ENCODE measurements at regions of chr16 and their contacts with region 1.

Region 1: DNA sequence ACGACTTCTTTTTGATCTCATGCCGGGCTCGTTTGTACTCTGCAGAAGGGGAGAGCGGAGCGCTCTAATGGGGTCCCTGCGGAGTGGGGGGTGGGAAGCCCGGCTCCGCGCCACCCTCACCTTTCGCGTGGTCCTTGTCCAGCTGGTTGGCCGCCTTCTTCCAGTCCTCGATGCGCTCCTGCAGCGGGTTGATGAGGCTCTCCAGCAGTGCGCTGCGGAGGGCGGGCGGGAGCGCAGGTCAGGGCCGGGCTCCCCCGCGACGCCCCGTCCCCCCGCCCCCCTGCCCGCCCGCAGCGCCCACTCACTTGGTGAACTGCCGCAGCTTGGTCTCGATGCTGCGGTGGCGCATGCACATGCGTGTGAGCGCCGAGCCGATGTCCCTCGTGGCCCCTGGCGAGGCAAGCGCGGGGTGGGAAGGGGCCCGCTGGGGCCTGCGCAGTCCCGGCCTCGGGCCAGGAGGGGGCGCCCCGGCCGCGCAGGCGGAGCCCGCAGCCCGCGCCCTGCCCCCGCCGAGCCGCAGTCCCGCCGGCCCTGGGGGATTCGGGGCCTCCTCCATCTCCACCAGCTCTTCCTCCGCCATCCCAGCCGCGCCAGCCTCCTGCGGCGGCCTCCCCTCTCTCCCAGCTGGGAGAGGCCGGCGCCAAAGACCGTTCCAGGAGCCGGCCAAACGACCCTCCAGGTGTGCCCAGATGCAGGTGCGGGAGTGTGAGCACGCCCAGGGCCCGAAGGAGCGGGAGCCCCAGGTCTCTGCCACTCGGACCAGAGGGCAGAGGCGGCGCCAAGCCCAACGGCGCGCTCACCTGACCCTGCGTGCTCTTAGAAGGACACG is 6.0 kb downstream of the MTSS2 start:
- DNase-seq: peak in 1 of 2 experiments; percentile 84
- H3K4me3 ChIP-seq: peak overlapping the region in 1 of 4 experiments; percentile 47; a peak in 2 of 8 replicates
- H3K27ac ChIP-seq: no peak overlapping the region
- H3K4me1 ChIP-seq: peaks cover 0 to 14% (median 4%) of the 10 kb centered on the region in 4 experiments; a peak in 5 of 7 replicates
- H3K27me3 ChIP-seq: peaks cover 0 to 5% (median 3%) of the 10 kb centered on the region in 4 experiments; a peak in 4 of 7 replicates
- CTCF ChIP-seq: peak in 2 of 3 experiments; percentile 73 to 86; a peak in 3 of 4 replicates
- EP300 ChIP-seq: no peak
- POLR2A ChIP-seq: no peak
- RAD21 ChIP-seq: peak; percentile 47 to 82

Region 2: DNA sequence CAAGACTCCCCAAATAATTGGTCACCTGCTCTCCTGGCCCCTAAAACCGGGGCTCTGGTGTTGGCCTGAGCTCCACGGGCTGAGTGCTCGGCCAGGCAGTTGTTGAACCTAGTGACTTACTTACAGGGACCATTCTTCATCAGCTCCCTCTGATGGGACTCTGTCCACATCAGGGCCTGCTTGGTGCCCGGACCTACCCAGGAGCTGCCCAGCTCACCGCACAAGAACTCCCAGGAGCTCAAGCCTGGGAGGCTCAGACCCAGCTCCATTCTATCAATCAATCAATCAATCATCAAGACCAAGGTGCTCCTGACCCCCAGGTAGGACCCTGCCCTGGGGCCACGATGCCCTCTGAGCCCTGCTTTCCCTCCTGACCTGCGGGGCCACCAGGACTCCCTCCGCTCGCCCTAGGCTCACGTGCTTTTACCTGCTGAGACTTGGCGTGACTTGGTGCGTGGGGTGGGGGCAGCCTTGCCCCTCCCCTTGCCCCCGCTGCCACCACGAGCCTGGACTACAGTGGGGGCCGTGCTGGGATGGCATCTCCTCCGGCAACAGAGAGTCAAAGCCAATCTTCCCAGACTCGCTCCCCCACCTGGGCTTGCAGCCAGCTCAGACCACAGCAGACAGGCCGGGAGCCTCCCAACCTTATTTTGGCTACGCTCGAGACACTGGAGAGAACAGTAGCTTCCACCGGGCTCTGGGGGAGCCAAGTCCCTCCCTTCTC is 17.8 kb before region 1 on chr16:
- CTCF ChIA-PET with region 1: interaction called, 12 read pairs
- POLR2A ChIA-PET with region 1: interaction called, 6 read pairs
- DNase-seq: no peak
- H3K4me3 ChIP-seq: no peak overlapping the region
- H3K27ac ChIP-seq: no peak overlapping the region
- H3K4me1 ChIP-seq: peaks cover 0 to 14% (median 7%) of the 10 kb centered on the region in 4 experiments; a peak in 6 of 7 replicates
- H3K27me3 ChIP-seq: no peaks in the 10 kb centered on the region
- CTCF ChIP-seq: no peak
- EP300 ChIP-seq: no peak
- POLR2A ChIP-seq: no peak
- RAD21 ChIP-seq: no peak

Region 3: GRCh38 chr16:70691223-70692129 is 11.6 kb after region 1 on chr16:
- CTCF ChIA-PET with region 1: interaction called, 22 read pairs
- POLR2A ChIA-PET with region 1: interaction called, 4 read pairs
- DNase-seq: no peak
- H3K4me3 ChIP-seq: no peak overlapping the region
- H3K27ac ChIP-seq: no peak overlapping the region
- H3K4me1 ChIP-seq: peaks cover 5 to 43% (median 30%) of the 10 kb centered on the region in 4 experiments
- H3K27me3 ChIP-seq: no peaks in the 10 kb centered on the region; a peak in 1 of 7 replicates
- CTCF ChIP-seq: no peak
- EP300 ChIP-seq: no peak
- POLR2A ChIP-seq: no peak
- RAD21 ChIP-seq: no peak

Region 4: DNA sequence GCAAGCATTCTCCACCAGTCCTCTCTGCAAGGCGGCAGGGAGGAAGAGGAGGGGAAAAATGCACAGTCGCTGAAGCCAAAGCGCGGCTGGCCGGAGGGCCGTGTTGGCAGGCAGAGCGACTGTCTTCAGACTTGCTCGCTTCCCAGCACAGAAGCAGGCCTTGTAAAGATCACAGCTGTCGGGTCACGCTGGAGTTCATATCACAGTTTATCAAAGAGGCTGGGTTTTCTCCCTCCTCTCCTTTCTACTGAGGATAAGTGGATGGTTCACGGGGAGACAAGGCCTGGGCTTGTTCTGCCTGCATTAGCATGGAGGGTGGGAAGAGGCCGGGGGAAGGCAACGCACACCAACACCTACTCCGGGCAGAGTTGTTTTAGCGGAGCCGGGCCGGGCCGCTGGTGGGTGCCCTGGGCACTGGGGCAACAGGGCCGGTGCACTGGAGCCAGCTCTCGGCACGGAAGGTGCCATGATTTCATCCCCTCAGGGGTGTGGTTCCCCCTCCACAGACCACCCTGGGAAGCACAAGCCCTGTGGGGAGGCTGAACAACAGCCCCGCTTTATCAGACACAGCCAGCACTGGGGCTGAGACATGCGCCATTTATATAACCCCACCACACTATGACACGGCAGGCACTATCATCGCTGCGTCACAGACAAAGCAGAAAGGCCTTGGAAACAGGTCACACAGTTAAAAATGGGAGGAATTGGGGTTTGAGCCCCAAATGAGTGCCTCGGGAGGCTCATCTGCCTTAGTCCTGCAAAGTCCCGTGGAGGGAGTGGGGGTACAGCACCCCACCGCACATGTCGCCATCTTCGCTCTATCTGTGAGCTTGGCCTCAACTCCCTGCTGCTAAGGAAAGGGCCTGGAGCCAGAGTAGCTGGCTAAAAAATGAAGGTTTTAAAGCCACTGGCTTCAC is 46.3 kb after region 1 on chr16:
- CTCF ChIA-PET with region 1: interaction called, 10 read pairs
- POLR2A ChIA-PET with region 1: interaction called, 3 read pairs
- DNase-seq: no peak
- H3K4me3 ChIP-seq: no peak overlapping the region
- H3K27ac ChIP-seq: no peak overlapping the region; the same call in 1 of the 2 replicates
- H3K4me1 ChIP-seq: peaks cover 0 to 6% (median 2%) of the 10 kb centered on the region in 4 experiments; a peak in 1 of 7 replicates
- H3K27me3 ChIP-seq: no peaks in the 10 kb centered on the region
- CTCF ChIP-seq: no peak
- EP300 ChIP-seq: no peak
- POLR2A ChIP-seq: no peak
- RAD21 ChIP-seq: no peak

Region 5: DNA sequence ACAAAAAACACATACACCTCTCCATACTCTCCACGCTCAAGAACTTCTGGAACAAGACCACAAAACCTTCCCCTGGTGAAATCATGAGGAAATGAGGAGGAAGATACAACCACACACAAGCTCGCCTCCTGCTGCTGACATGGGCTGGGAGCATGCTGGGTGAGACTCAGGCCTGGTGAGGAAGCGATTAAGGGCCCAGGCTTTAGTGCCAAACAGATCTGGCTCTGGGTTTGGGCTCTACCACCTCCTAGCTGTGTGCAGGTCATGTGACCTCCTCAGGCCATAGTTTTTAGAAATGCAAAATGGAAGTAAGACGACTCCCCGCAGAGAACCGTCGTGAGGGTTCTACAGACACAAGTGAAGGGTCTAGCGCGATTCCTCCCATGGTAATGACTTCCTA is 79.8 kb after region 1 on chr16:
- CTCF ChIA-PET with region 1: interaction called, 35 read pairs
- POLR2A ChIA-PET with region 1: interaction called, 5 read pairs
- DNase-seq: no peak
- H3K4me3 ChIP-seq: no peak overlapping the region
- H3K27ac ChIP-seq: no peak overlapping the region
- H3K4me1 ChIP-seq: peaks cover 0 to 10% (median 2%) of the 10 kb centered on the region in 4 experiments; a peak in 2 of 7 replicates
- H3K27me3 ChIP-seq: no peaks in the 10 kb centered on the region
- CTCF ChIP-seq: peak; percentile 16 to 45 (median 22); a peak in 3 of 4 replicates
- EP300 ChIP-seq: no peak
- POLR2A ChIP-seq: no peak
- RAD21 ChIP-seq: peak in 1 of 2 experiments; percentile 23; a peak in 1 of 4 replicates

Region 6: GRCh38 chr16:70778901-70779309 is 99.0 kb after region 1 on chr16:
- CTCF ChIA-PET with region 1: interaction called, 141 read pairs
- POLR2A ChIA-PET with region 1: interaction called, 4 read pairs
- DNase-seq: peak; percentile 74 to 87
- H3K4me3 ChIP-seq: no peak overlapping the region
- H3K27ac ChIP-seq: no peak overlapping the region
- H3K4me1 ChIP-seq: no peaks in the 10 kb centered on the region; a peak in 1 of 7 replicates
- H3K27me3 ChIP-seq: no peaks in the 10 kb centered on the region
- CTCF ChIP-seq: no peak
- EP300 ChIP-seq: no peak
- POLR2A ChIP-seq: no peak
- RAD21 ChIP-seq: no peak